CD8-positive, alpha-beta T cell (primary cell): ENCODE measurements at regions of chr4 and their contacts with region 1.

Region 1: DNA sequence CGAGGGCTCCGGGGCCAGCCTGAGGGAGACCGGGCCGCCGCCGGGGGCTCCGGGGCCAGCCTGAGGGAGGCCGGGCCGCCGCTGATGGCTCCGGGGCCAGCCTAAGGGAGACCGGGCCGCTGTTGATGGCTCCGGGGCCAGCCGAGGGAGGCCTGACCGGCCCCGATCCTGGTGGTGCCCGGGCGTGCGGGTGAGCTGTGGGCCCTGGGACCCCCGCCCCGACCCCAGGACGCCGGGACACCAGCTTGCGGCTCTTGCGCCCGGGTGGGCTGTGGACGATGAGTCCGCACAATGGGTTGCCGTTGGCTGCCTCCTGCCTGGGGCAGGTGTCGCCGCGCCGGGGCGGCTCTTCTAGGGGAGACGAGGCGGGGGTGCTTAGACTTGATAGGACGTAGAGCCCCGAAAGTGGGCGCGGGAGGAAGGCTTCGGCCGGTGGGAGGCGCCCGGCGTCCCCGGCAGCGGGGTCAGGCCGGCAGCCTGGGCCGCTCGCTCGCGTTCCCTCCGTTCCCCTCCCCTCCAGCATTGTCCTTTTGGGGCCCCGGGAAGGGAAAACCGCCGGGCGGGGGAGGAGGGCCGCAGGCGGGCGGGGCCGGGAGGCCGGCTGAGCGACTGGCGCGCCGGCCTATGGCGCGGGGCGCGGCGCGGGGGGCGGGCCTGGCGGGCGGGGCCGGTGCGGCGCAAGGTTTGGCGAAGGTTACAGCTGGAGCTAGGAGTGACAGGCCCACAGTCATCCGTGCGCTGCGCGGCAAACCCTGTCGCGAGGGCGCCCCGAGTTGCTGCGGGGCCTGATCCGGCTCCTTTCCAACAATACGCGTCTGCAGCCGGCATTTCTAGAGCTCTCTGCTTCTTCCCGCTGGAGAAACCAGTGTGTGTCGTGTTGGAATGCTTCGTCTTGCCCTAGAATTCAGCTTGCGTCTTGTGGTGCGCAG is 790 bp downstream of the KIAA0232 start:
- DNase-seq: peak; percentile 79 to 93 (median 87)
- ATAC-seq: peak; percentile 72
- H3K4me3 ChIP-seq: peak overlapping the region; percentile 72 to 93
- H3K4me3 Mint-ChIP-seq: peak overlapping the region; percentile 89
- H3K27ac ChIP-seq: peak overlapping the region; percentile 76 to 94
- H3K27ac Mint-ChIP-seq: peak overlapping the region; percentile 84
- H3K4me1 ChIP-seq: peaks cover 63% of the 10 kb centered on the region
- H3K4me1 Mint-ChIP-seq: peaks cover 70% of the 10 kb centered on the region
- H3K27me3 ChIP-seq: no peaks in the 10 kb centered on the region
- H3K27me3 Mint-ChIP-seq: no peaks in the 10 kb centered on the region
- CTCF ChIP-seq: no peak

Region 2: GRCh38 chr4:6574747-6575502 is 208.4 kb before region 1 on chr4 and contains the start of gene MAN2B2:
- CTCF ChIA-PET with region 1: no interaction called
- POLR2A ChIA-PET with region 1: no interaction called
- intact Hi-C with region 1: loop called in 1 of 2 experiments (anchors 5 kb)
- DNase-seq: peak; percentile 62 to 89 (median 82)
- ATAC-seq: peak; percentile 94
- H3K4me3 ChIP-seq: peak within 1 kb of the TSS; percentile 99
- H3K4me3 Mint-ChIP-seq: peak within 1 kb of the TSS; percentile 91
- H3K27ac ChIP-seq: peak within 1 kb of the TSS; percentile 80 to 85
- H3K27ac Mint-ChIP-seq: peak within 1 kb of the TSS; percentile 84
- H3K4me1 ChIP-seq: peaks cover 22% of the 10 kb centered on the region
- H3K4me1 Mint-ChIP-seq: peaks cover 21% of the 10 kb centered on the region
- H3K27me3 ChIP-seq: no peaks in the 10 kb centered on the region
- H3K27me3 Mint-ChIP-seq: no peaks in the 10 kb centered on the region
- CTCF ChIP-seq: no peak
- total RNA-seq, gene MAN2B2: 26.4 to 26.7 TPM

Region 3: GRCh38 chr4:6709230-6710114 is 73.8 kb before region 1 on chr4 and contains the start of gene MRFAP1L1:
- CTCF ChIA-PET with region 1: no interaction called
- POLR2A ChIA-PET with region 1: interaction called, 3 read pairs
- intact Hi-C with region 1: loop called in 1 of 2 experiments (anchors 1 kb)
- DNase-seq: peak; percentile 92 to 99 (median 97)
- ATAC-seq: peak; percentile 89
- H3K4me3 ChIP-seq: peak within 1 kb of the TSS; percentile 73 to 86
- H3K4me3 Mint-ChIP-seq: peak within 1 kb of the TSS; percentile 98
- H3K27ac ChIP-seq: peak within 1 kb of the TSS; percentile 79
- H3K27ac Mint-ChIP-seq: peak within 1 kb of the TSS; percentile 99
- H3K4me1 ChIP-seq: peaks cover 48% of the 10 kb centered on the region
- H3K4me1 Mint-ChIP-seq: peaks cover 65% of the 10 kb centered on the region
- H3K27me3 ChIP-seq: no peaks in the 10 kb centered on the region
- H3K27me3 Mint-ChIP-seq: no peaks in the 10 kb centered on the region
- CTCF ChIP-seq: no peak
- total RNA-seq, gene MRFAP1L1: 27.5 to 30.0 TPM

Region 4: GRCh38 chr4:6761649-6762602 is 21.4 kb before region 1 on chr4:
- CTCF ChIA-PET with region 1: interaction called, 10 read pairs
- POLR2A ChIA-PET with region 1: interaction called, 9 read pairs
- intact Hi-C with region 1: loop called in 1 of 2 experiments (anchors 1 kb)
- DNase-seq: peak in 6 of 9 experiments; percentile 19 to 52 (median 35)
- ATAC-seq: peak; percentile 74
- H3K4me3 ChIP-seq: no peak overlapping the region
- H3K4me3 Mint-ChIP-seq: peak overlapping the region; percentile 74
- H3K27ac ChIP-seq: no peak overlapping the region
- H3K27ac Mint-ChIP-seq: peak overlapping the region; percentile 81
- H3K4me1 ChIP-seq: peaks cover 8% of the 10 kb centered on the region
- H3K4me1 Mint-ChIP-seq: peaks cover 38% of the 10 kb centered on the region
- H3K27me3 ChIP-seq: no peaks in the 10 kb centered on the region
- H3K27me3 Mint-ChIP-seq: no peaks in the 10 kb centered on the region
- CTCF ChIP-seq: no peak

Region 5: GRCh38 chr4:6873792-6874461 is 90.6 kb after region 1 on chr4:
- CTCF ChIA-PET with region 1: interaction called, 22 read pairs
- POLR2A ChIA-PET with region 1: interaction called, 3 read pairs
- intact Hi-C with region 1: loop called (anchors 2 to 5 kb)
- DNase-seq: peak; percentile 69 to 89 (median 82)
- ATAC-seq: peak; percentile 96
- H3K4me3 ChIP-seq: no peak overlapping the region
- H3K4me3 Mint-ChIP-seq: no peak overlapping the region
- H3K27ac ChIP-seq: no peak overlapping the region
- H3K27ac Mint-ChIP-seq: no peak overlapping the region
- H3K4me1 ChIP-seq: no peaks in the 10 kb centered on the region
- H3K4me1 Mint-ChIP-seq: peaks cover 3% of the 10 kb centered on the region
- H3K27me3 ChIP-seq: no peaks in the 10 kb centered on the region
- H3K27me3 Mint-ChIP-seq: no peaks in the 10 kb centered on the region
- CTCF ChIP-seq: peak; percentile 79

Region 6: DNA sequence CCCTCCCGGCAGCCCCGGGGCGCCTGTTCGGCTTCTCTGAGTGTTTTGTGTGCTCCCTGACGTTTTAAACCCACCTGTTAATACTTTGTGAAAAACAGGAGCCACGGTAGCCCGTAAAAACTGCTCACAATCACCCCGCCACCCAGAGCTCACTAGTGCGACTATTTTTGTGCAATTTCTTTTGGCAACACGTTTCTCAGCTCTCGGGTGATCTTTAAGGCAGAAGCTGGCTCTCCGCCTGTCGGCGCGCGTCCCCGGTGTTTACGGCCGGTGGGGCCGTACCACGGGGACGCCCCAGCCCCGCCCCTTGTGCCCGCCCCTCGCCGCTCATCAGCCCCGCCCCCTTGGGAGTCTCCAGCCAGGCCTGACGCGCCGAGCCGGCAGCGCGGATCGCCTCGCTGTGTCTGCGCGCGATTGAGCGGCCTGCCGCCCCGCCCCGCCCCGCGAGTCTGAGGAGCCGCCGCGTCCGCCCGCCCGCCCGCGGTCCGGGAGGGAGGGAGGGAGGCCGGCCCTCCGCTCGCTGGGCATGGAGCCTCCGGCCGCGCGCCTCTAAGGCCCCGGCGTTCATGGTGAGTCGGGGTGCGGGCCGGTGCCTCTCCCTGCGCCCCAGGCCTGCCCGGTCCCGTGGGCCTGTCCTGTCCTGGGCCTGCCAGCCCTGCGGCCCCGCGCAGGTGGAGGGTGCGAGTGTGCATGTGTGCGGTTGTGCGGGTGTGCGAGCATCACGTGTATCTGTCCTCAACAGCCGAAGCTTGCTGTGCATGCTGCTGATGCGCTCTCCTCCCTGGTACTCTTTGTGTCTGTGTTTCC is 203.7 kb after region 1 on chr4:
- CTCF ChIA-PET with region 1: no interaction called
- POLR2A ChIA-PET with region 1: no interaction called
- intact Hi-C with region 1: loop called (anchors 1 kb)
- DNase-seq: peak; percentile 87 to 97 (median 93)
- ATAC-seq: peak; percentile 92
- H3K4me3 ChIP-seq: peak overlapping the region; percentile 91 to 94
- H3K4me3 Mint-ChIP-seq: peak overlapping the region; percentile 94
- H3K27ac ChIP-seq: peak overlapping the region; percentile 78 to 88
- H3K27ac Mint-ChIP-seq: peak overlapping the region; percentile 98
- H3K4me1 ChIP-seq: peaks cover 55% of the 10 kb centered on the region
- H3K4me1 Mint-ChIP-seq: peaks cover 81% of the 10 kb centered on the region
- H3K27me3 ChIP-seq: no peaks in the 10 kb centered on the region
- H3K27me3 Mint-ChIP-seq: no peaks in the 10 kb centered on the region
- CTCF ChIP-seq: no peak

Region 7: GRCh38 chr4:7101692-7102515 is 318.6 kb after region 1 on chr4:
- CTCF ChIA-PET with region 1: no interaction called
- POLR2A ChIA-PET with region 1: no interaction called
- intact Hi-C with region 1: loop called (anchors 1 to 2 kb)
- DNase-seq: peak in 7 of 9 experiments; percentile 23 to 66 (median 50)
- ATAC-seq: peak; percentile 39
- H3K4me3 ChIP-seq: peak overlapping the region; percentile 84 to 90
- H3K4me3 Mint-ChIP-seq: peak overlapping the region; percentile 91
- H3K27ac ChIP-seq: no peak overlapping the region
- H3K27ac Mint-ChIP-seq: peak overlapping the region; percentile 45
- H3K4me1 ChIP-seq: peaks cover 25% of the 10 kb centered on the region
- H3K4me1 Mint-ChIP-seq: peaks cover 16% of the 10 kb centered on the region
- H3K27me3 ChIP-seq: no peaks in the 10 kb centered on the region
- H3K27me3 Mint-ChIP-seq: no peaks in the 10 kb centered on the region
- CTCF ChIP-seq: peak; percentile 46